Adrenal gland (tissue), 19 donors: ENCODE measurements at regions of chr5 and their contacts with region 1.

Region 1: GRCh38 chr5:132866342-132867045 is at the starts of genes GDF9 and UQCRQ:
- DNase-seq: peak; percentile 95 to 99 (median 98)
- H3K4me3 ChIP-seq: peak within 1 kb of the TSS; percentile 17 to 85 (median 73)
- H3K27ac ChIP-seq: peak within 1 kb of the TSS; percentile 88 to 97 (median 96)
- H3K4me1 ChIP-seq: peaks cover 11 to 17% of the 10 kb centered on the region in 2 donors
- H3K27me3 ChIP-seq: no peaks in the 10 kb centered on the region
- CTCF ChIP-seq: peak in 1 of 6 experiments; percentile 16
- POLR2A ChIP-seq: peak; percentile 74 to 96
- total RNA-seq, gene GDF9: 0.41 to 1.4 (median 0.70) TPM
- total RNA-seq, gene UQCRQ: 141 to 807 (median 505) TPM

Region 2: GRCh38 chr5:132829742-132830435 is 36.6 kb before region 1 on chr5:
- intact Hi-C with region 1: loop called in 1 of 2 experiments (anchors 5 kb)
- DNase-seq: peak; percentile 65 to 87 (median 78)
- H3K4me3 ChIP-seq: peak overlapping the region in 3 of 4 donors; percentile 25 to 81 (median 50)
- H3K27ac ChIP-seq: peak overlapping the region in 3 of 5 donors; percentile 50 to 81 (median 73)
- H3K4me1 ChIP-seq: peaks cover 6 to 7% of the 10 kb centered on the region in 2 donors
- H3K27me3 ChIP-seq: no peaks in the 10 kb centered on the region
- CTCF ChIP-seq: peak; percentile 60 to 88 (median 76)
- POLR2A ChIP-seq: peak; percentile 14 to 16